Stomach (tissue), 19 donors: ENCODE measurements at regions of chr17 and their contacts with region 1.

Region 1: GRCh38 chr17:44919885-44920564 is 4.7 kb upstream of the GFAP start:
- DNase-seq: peak; percentile 83 to 93
- H3K4me3 ChIP-seq: no peak overlapping the region
- H3K27ac ChIP-seq: no peak overlapping the region
- H3K4me1 ChIP-seq: peaks cover 0 to 25% (median 13%) of the 10 kb centered on the region in 4 donors
- H3K27me3 ChIP-seq: peaks cover 0 to 30% (median 7%) of the 10 kb centered on the region in 3 donors
- CTCF ChIP-seq: peak in 5 of 7 experiments; percentile 68 to 92 (median 79)
- EP300 ChIP-seq: no peak
- POLR2A ChIP-seq: no peak

Region 2: DNA sequence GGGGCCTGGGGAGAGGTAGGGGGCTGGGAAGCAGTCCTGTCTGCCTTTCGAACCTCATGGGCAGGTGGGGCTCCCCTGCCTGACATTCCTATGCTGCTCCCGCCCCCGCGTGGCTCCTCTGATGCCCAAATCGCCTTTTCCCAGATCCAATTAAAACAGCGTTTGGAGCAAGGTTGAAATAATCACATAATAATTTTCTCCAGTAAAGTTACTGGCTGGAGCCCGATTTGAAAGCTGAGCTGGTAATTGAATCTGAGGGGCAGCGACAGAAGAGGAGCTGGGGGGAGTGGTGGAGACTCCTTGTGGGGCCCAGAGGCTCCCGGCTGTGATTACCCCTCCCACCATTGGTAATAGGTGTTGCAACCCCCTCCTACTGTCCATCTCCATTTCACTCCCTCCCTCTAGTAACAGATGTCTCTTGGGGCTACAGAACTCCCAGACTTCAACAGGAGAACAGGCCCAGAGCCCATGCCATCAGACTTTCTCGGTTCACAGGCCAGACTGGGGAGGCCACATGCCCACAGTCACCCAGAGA is 87.0 kb after region 1 on chr17:
- intact Hi-C with region 1: no loop called
- DNase-seq: peak in 1 of 2 donors; percentile 36
- H3K4me3 ChIP-seq: no peak overlapping the region
- H3K27ac ChIP-seq: no peak overlapping the region
- H3K4me1 ChIP-seq: no peaks in the 10 kb centered on the region
- H3K27me3 ChIP-seq: peaks cover 0 to 18% (median 0%) of the 10 kb centered on the region in 3 donors
- CTCF ChIP-seq: no peak
- EP300 ChIP-seq: no peak
- POLR2A ChIP-seq: no peak

Region 3: GRCh38 chr17:45021607-45022287 is 101.7 kb after region 1 on chr17:
- intact Hi-C with region 1: loop called (anchors 5 kb)
- DNase-seq: peak; percentile 68 to 89
- H3K4me3 ChIP-seq: peak overlapping the region; percentile 34 to 52 (median 44)
- H3K27ac ChIP-seq: peak overlapping the region; percentile 34 to 78 (median 72)
- H3K4me1 ChIP-seq: peaks cover 37 to 52% (median 43%) of the 10 kb centered on the region in 4 donors
- H3K27me3 ChIP-seq: peaks cover 0 to 37% (median 13%) of the 10 kb centered on the region in 3 donors
- CTCF ChIP-seq: peak in 5 of 7 experiments; percentile 28 to 98 (median 93)
- EP300 ChIP-seq: no peak
- POLR2A ChIP-seq: no peak

Region 4: DNA sequence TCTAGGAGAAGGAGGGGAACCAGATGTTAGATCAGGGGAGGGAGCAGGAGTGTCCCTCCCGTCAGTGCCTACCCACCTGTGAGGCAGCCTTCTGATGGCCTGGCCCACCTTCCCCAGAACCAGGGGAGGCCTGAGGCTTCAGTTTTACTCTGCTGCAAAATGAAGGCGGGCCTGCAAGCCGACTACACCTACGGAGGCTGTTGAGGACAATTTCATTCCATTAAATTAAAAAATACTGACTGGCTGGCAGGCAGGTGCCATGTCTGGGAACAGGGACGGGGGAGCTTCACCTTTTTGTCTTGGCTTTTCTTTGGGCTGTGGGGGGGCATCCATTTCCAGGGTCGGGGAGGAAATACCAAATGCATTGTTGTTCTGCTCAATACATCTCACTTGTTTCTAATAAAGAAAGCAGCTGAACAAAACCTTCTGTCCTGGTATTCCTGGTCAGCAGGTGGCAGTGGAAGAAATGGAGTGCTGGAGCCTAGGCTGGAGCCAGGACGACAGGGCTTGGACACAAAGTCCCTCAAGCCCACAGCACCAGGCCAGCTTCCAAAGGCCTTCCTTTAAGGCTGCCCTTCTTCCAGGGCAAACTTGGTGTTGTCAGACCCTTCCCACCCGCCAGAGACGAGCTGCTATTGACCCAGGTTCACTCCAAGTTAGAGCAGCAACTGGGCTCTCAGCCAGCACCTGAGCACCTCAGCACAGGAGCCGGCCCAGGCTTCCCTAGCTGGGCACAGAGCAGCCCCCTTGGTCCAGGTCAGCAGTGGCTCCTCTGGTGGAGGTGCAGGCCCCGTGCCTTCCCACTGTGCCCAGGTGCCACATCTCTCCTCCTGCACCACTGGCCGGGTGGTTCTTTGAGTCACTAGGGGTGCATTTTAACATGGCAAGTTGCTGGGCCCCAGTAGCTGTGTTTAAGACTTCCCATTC is 188.8 kb after region 1 on chr17:
- intact Hi-C with region 1: loop called (anchors 10 kb)
- DNase-seq: peak; percentile 35 to 37
- H3K4me3 ChIP-seq: no peak overlapping the region
- H3K27ac ChIP-seq: peak overlapping the region in 2 of 5 donors; percentile 26 to 39
- H3K4me1 ChIP-seq: peaks cover 6 to 49% (median 24%) of the 10 kb centered on the region in 4 donors
- H3K27me3 ChIP-seq: no peaks in the 10 kb centered on the region
- CTCF ChIP-seq: peak in 1 of 7 experiments; percentile 8
- EP300 ChIP-seq: no peak
- POLR2A ChIP-seq: no peak